B cell (primary cell): ENCODE measurements at regions of chr13 and their contacts with region 1.

Region 1: DNA sequence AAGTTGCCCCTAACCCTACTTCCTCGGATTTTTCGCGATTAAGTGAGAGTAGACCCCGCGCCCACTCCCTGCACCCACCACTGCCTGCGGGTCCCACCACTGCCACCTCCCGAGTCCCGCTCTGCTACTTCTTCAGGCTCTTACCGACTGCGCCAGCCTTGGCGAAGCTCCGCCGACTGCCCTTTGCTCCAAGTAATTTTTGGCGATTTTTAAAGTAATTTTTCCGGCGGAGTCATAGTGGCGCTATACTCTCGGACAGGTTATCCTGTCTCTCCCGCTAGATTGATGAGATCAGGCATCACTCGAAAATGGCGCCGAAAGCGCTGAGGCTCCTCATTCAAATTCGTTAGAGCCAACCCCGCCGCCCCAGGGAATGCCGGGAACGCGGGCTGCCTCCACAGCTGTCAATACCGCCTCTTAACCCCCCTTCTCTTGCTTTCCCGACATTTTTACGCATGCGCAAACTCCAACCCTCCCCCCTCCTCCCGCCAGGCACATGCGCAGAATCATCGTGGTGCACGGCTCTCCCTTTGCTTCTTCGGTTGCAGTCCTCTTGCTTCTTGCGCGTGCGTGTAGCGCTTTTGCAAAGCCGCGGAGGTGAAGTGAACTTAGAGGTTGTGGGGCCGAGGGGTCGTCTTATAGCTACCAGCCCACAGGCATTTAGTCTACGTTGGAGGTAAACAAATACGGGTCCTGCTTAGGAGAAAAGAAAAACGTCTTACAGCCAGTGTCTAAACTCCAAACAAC is 66.6 kb downstream of the KCNRG start:
- DNase-seq: peak; percentile 99
- ATAC-seq: peak; percentile 77
- H3K4me3 ChIP-seq: peak overlapping the region; percentile 81 to 99 (median 91)
- H3K4me3 Mint-ChIP-seq: peak overlapping the region; percentile 94
- H3K27ac ChIP-seq: peak overlapping the region; percentile 82 to 85
- H3K27ac Mint-ChIP-seq: peak overlapping the region; percentile 94
- H3K4me1 ChIP-seq: peaks cover 29 to 48% of the 10 kb centered on the region in 2 donors
- H3K4me1 Mint-ChIP-seq: peaks cover 57% of the 10 kb centered on the region
- H3K27me3 ChIP-seq: no peaks in the 10 kb centered on the region
- H3K27me3 Mint-ChIP-seq: no peaks in the 10 kb centered on the region
- CTCF ChIP-seq: no peak

Region 2: GRCh38 chr13:49976314-49977258 is 105.3 kb before region 1 on chr13:
- CTCF ChIA-PET with region 1: interaction called, 10 read pairs
- POLR2A ChIA-PET with region 1: no interaction called
- intact Hi-C with region 1: loop called (anchors 5 kb)
- DNase-seq: peak; percentile 86
- ATAC-seq: peak; percentile 78
- H3K4me3 ChIP-seq: no peak overlapping the region
- H3K4me3 Mint-ChIP-seq: no peak overlapping the region
- H3K27ac ChIP-seq: no peak overlapping the region
- H3K27ac Mint-ChIP-seq: no peak overlapping the region
- H3K4me1 ChIP-seq: peaks cover 0 to 4% of the 10 kb centered on the region in 2 donors
- H3K4me1 Mint-ChIP-seq: peaks cover 4% of the 10 kb centered on the region
- H3K27me3 ChIP-seq: no peaks in the 10 kb centered on the region
- H3K27me3 Mint-ChIP-seq: no peaks in the 10 kb centered on the region
- CTCF ChIP-seq: peak; percentile 98

Region 3: DNA sequence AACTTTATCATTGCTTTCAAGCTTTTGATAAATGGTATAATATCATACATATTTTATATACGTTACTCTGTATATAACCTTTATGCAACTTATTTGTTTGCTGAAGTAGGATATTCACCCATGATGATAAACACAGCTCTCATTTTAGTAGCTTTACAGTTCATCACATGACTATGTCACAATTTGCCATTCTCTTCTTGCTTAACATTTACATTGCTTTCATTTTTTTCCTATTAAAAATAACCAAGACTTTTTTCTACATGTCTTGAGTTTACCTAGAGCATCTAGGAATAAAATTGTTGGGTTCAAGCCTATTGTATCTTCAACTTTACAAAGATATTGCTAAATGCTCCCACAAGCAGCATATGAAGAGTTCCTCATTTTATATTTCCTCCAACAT is 12.6 kb before region 1 on chr13:
- CTCF ChIA-PET with region 1: interaction called, 20 read pairs
- POLR2A ChIA-PET with region 1: interaction called, 6 read pairs
- intact Hi-C with region 1: loop called (anchors 1 kb)
- DNase-seq: no peak
- ATAC-seq: no peak
- H3K4me3 ChIP-seq: no peak overlapping the region
- H3K4me3 Mint-ChIP-seq: no peak overlapping the region
- H3K27ac ChIP-seq: peak overlapping the region in 1 of 2 donors; percentile 10
- H3K27ac Mint-ChIP-seq: no peak overlapping the region
- H3K4me1 ChIP-seq: peaks cover 0 to 15% of the 10 kb centered on the region in 2 donors
- H3K4me1 Mint-ChIP-seq: peaks cover 25% of the 10 kb centered on the region
- H3K27me3 ChIP-seq: no peaks in the 10 kb centered on the region
- H3K27me3 Mint-ChIP-seq: no peaks in the 10 kb centered on the region
- CTCF ChIP-seq: no peak

Region 4: GRCh38 chr13:50106559-50106958 is 24.7 kb after region 1 on chr13:
- CTCF ChIA-PET with region 1: interaction called, 22 read pairs
- POLR2A ChIA-PET with region 1: interaction called, 4 read pairs
- intact Hi-C with region 1: loop called (anchors 2 kb)
- DNase-seq: peak; percentile 61
- ATAC-seq: peak; percentile 81
- H3K4me3 ChIP-seq: peak overlapping the region in 4 of 5 experiments; percentile 15 to 42 (median 26)
- H3K4me3 Mint-ChIP-seq: peak overlapping the region; percentile 77
- H3K27ac ChIP-seq: peak overlapping the region; percentile 59 to 89
- H3K27ac Mint-ChIP-seq: peak overlapping the region; percentile 92
- H3K4me1 ChIP-seq: peaks cover 49 to 68% of the 10 kb centered on the region in 2 donors
- H3K4me1 Mint-ChIP-seq: peaks cover 60% of the 10 kb centered on the region
- H3K27me3 ChIP-seq: no peaks in the 10 kb centered on the region
- H3K27me3 Mint-ChIP-seq: no peaks in the 10 kb centered on the region
- CTCF ChIP-seq: no peak

Region 5: DNA sequence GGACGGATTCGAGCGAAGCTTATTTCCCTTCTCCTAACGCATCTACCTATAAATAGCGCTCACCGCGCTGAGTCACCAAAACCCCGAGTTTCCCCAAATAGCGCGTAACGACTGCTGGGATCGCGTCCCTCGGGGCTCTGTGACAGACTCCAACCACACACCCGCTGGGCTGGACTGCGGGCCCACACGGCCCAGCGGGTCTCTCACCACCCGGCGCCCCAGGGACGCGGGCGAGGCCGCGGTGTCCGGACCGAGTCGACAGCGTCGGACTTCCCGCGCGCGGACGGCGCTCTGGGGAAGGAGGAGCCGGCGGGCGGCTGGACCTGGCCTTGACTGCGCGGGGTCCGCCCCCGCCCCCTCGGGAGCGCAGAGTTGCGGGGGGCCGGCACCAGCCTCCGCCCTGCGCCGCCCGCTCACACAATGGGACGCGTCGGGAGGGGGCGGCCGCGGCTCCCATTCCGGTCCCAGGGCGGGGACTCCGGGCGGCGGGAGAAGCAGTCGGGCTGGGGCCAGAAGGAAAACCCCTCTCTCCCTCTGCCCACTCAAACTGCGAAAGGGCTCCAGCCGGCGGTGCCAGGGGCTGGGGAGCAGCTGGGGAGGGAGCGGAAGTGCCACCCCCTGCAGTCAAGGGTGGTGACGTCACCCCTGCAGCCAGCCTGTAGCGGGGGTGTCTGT is 42.1 kb after region 1 on chr13:
- CTCF ChIA-PET with region 1: interaction called, 195 read pairs
- POLR2A ChIA-PET with region 1: interaction called, 142 read pairs
- intact Hi-C with region 1: loop called (anchors 1 kb)
- DNase-seq: peak; percentile 84
- ATAC-seq: peak; percentile 62
- H3K4me3 ChIP-seq: peak overlapping the region; percentile 77 to 98 (median 98)
- H3K4me3 Mint-ChIP-seq: peak overlapping the region; percentile 92
- H3K27ac ChIP-seq: peak overlapping the region; percentile 73 to 98
- H3K27ac Mint-ChIP-seq: peak overlapping the region; percentile 96
- H3K4me1 ChIP-seq: peaks cover 50 to 54% of the 10 kb centered on the region in 2 donors
- H3K4me1 Mint-ChIP-seq: peaks cover 64% of the 10 kb centered on the region
- H3K27me3 ChIP-seq: peaks cover 0 to 12% (median 6%) of the 10 kb centered on the region in 4 experiments
- H3K27me3 Mint-ChIP-seq: peaks cover 7% of the 10 kb centered on the region
- CTCF ChIP-seq: no peak

Region 6: DNA sequence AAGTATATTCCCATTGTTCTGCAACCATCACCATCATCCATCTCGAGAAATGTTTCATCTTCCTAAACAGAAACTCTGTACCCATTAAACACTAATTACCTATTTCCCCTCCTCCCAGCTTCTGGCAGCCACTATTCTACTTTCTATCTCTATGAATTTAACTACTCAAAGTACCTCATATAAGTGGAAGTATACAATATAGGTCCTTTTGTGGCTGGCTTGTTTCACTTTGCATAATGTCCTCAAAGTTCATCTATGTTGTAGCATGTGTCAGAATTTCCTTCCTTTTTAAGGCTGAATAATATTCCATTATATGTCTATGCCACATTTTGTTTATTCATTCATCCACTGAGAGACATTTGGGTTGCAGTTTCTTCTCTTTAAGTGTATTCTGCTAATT is 92.8 kb after region 1 on chr13:
- CTCF ChIA-PET with region 1: no interaction called
- POLR2A ChIA-PET with region 1: no interaction called
- intact Hi-C with region 1: no loop called
- DNase-seq: no peak
- ATAC-seq: no peak
- H3K4me3 ChIP-seq: no peak overlapping the region
- H3K4me3 Mint-ChIP-seq: no peak overlapping the region
- H3K27ac ChIP-seq: no peak overlapping the region
- H3K27ac Mint-ChIP-seq: no peak overlapping the region
- H3K4me1 ChIP-seq: no peaks in the 10 kb centered on the region
- H3K4me1 Mint-ChIP-seq: no peaks in the 10 kb centered on the region
- H3K27me3 ChIP-seq: no peaks in the 10 kb centered on the region
- H3K27me3 Mint-ChIP-seq: no peaks in the 10 kb centered on the region
- CTCF ChIP-seq: no peak

Region 7: GRCh38 chr13:50529154-50529882 is 447.5 kb after region 1 on chr13:
- CTCF ChIA-PET with region 1: interaction called, 6 read pairs
- POLR2A ChIA-PET with region 1: no interaction called
- intact Hi-C with region 1: loop called (anchors 5 kb)
- DNase-seq: no peak
- ATAC-seq: no peak
- H3K4me3 ChIP-seq: no peak overlapping the region
- H3K4me3 Mint-ChIP-seq: no peak overlapping the region
- H3K27ac ChIP-seq: no peak overlapping the region
- H3K27ac Mint-ChIP-seq: no peak overlapping the region
- H3K4me1 ChIP-seq: peaks cover 24 to 25% of the 10 kb centered on the region in 2 donors
- H3K4me1 Mint-ChIP-seq: peaks cover 35% of the 10 kb centered on the region
- H3K27me3 ChIP-seq: no peaks in the 10 kb centered on the region
- H3K27me3 Mint-ChIP-seq: no peaks in the 10 kb centered on the region
- CTCF ChIP-seq: no peak

Region 8: DNA sequence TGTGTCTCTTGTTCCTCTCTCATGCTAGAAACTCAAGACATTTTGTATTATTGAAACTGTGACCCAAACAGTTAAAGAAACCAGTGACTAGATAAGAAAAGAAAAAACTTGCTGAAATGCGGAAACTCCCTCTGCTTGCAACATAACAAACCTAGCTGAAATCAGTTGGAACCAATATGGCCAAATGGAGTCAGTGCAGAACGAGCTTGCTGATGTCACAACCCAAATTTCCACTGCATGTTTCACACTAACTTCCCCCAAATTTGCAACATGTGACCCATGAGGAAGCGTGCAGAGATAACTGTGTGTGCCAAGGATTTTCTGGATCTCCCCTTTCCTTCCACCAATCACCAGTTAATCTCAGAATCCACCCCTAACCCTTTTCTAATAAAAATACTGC is 553.7 kb after region 1 on chr13:
- CTCF ChIA-PET with region 1: interaction called, 7 read pairs
- POLR2A ChIA-PET with region 1: no interaction called
- intact Hi-C with region 1: loop called (anchors 5 kb)
- DNase-seq: peak; percentile 90
- ATAC-seq: peak; percentile 79
- H3K4me3 ChIP-seq: no peak overlapping the region
- H3K4me3 Mint-ChIP-seq: peak overlapping the region; percentile 63
- H3K27ac ChIP-seq: peak overlapping the region; percentile 92 to 95
- H3K27ac Mint-ChIP-seq: peak overlapping the region; percentile 96
- H3K4me1 ChIP-seq: peaks cover 26 to 30% of the 10 kb centered on the region in 2 donors
- H3K4me1 Mint-ChIP-seq: peaks cover 44% of the 10 kb centered on the region
- H3K27me3 ChIP-seq: no peaks in the 10 kb centered on the region
- H3K27me3 Mint-ChIP-seq: no peaks in the 10 kb centered on the region
- CTCF ChIP-seq: no peak